WTC11 (cell line): ENCODE measurements at regions of chr19 and their contacts with region 1.

Region 1: GRCh38 chr19:2274931-2275535 is 6.9 kb downstream of the PEAK3 start:
- DNase-seq: peak; percentile 84
- ATAC-seq: peak; percentile 52
- H3K4me3 Mint-ChIP-seq: no peak overlapping the region
- H3K27ac Mint-ChIP-seq: no peak overlapping the region
- H3K4me1 Mint-ChIP-seq: peaks cover 22% of the 10 kb centered on the region
- H3K27me3 Mint-ChIP-seq: no peaks in the 10 kb centered on the region; the same call in 1 of the 2 replicates
- CTCF ChIP-seq: peak; percentile 60; the same call in 1 of the 2 replicates

Region 2: DNA sequence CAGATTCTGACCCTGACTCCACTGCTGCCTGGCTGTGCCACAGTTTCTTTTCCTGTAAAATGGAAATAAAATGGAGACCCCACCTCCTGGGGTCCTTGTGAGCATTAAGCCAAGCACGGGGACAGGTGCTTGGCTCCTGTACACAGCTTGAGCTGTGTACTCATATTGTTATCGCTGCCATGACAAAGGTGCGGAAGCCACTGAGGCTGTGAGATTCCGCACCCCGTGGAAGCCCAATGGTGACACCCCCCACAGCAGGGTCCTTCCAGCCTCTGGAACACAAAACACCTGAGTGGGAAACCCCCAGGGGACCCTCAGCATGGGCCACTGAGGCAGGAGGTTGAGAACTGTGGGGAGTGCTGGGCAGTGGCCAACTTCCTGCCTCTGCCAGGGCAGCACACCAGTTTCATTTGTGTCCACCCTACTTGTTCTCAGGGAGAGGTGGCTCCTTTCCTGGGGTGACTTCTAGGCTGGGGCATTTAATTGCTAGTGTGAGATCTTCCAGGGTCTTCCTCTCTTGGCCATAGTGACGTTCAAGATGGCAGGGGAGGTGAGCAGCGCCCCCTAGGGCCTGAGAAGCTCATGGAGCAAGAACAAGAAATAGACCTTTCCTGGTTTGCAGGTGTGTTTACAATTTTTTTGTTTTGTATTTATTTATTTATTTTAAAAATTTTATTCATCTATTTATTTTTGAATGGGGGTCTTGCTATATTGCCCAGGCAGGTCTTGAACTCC is 13.4 kb before region 1 on chr19:
- CTCF ChIA-PET with region 1: interaction called, 11 read pairs
- POLR2A ChIA-PET with region 1: interaction called, 3 read pairs
- DNase-seq: peak; percentile 74
- ATAC-seq: peak; percentile 68
- H3K4me3 Mint-ChIP-seq: no peak overlapping the region
- H3K27ac Mint-ChIP-seq: no peak overlapping the region
- H3K4me1 Mint-ChIP-seq: 0 out of 2 replicates have a peak, but pooled peaks cover 2% of the 10 kb centered on the region
- H3K27me3 Mint-ChIP-seq: peaks cover 4% of the 10 kb centered on the region; the same call in 1 of the 2 replicates
- CTCF ChIP-seq: peak; percentile 75; the same call in 1 of the 2 replicates

Region 3: GRCh38 chr19:2328401-2329148 is 53.5 kb after region 1 on chr19 and contains the starts of genes LSM7 and SPPL2B:
- CTCF ChIA-PET with region 1: interaction called, 11 read pairs
- POLR2A ChIA-PET with region 1: no interaction called
- DNase-seq: peak; percentile 80
- ATAC-seq: peak; percentile 51
- H3K4me3 Mint-ChIP-seq: peak within 1 kb of the TSS; percentile 100
- H3K27ac Mint-ChIP-seq: peak within 1 kb of the TSS; percentile 98
- H3K4me1 Mint-ChIP-seq: peaks cover 41% of the 10 kb centered on the region
- H3K27me3 Mint-ChIP-seq: no peaks in the 10 kb centered on the region
- CTCF ChIP-seq: no peak
- total RNA-seq, gene LSM7: 245 to 250 TPM (median 248 TPM) in 3 replicates
- total RNA-seq, gene SPPL2B: 94.6 to 117 TPM (median 95.8 TPM) in 3 replicates

Region 4: DNA sequence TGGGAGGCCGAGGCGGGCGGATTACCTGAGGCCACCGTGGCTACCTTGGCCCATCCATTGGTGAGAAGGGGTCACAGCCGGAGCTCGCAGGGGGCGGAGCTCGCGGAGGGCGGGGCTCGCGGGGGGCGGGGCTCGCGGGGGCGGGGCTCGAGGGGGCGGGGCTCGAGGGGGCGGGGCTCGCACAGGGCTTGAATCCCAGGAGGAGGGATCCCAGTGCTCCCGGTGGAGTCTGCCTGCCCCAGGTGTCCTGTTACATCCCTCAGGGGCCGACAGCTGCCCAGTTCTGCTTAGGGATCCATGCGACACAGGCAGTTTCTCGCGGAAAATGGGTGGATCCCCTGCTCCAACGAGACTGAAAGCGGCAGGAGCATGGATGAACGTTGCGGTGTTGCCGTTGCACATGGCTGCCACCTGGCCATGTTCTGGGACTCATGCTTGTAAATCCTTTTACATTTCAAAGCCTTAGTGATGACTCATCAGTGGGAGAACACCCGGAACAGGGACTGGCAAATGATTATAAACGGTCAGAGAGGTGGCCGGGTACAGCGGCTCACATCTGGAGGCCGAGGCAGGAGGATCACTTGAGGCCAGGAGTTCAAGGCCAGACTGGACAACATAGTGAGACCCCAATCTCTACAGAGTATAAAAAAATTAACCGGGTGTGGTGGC is 110.2 kb after region 1 on chr19:
- CTCF ChIA-PET with region 1: interaction called, 10 read pairs
- POLR2A ChIA-PET with region 1: no interaction called
- DNase-seq: peak; percentile 84
- ATAC-seq: peak; percentile 94
- H3K4me3 Mint-ChIP-seq: peak overlapping the region; percentile 48
- H3K27ac Mint-ChIP-seq: peak overlapping the region; percentile 80
- H3K4me1 Mint-ChIP-seq: peaks cover 3% of the 10 kb centered on the region; the same call in 1 of the 2 replicates
- H3K27me3 Mint-ChIP-seq: peaks cover 9% of the 10 kb centered on the region
- CTCF ChIP-seq: no peak